ENCODE measurements at regions of chr1 and their contacts with region 1.

Region 1: GRCh38 chr1:109879881-109880525 is 30.6 kb upstream of the CSF1 start:
- DNase-seq: no peak
- ATAC-seq: no peak
- H3K4me3 ChIP-seq: no peak overlapping the region
- H3K27ac ChIP-seq: peak overlapping the region; percentile 85; the same call in 1 of the 2 replicates
- H3K4me1 ChIP-seq: peaks cover 67% of the 10 kb centered on the region
- H3K27me3 ChIP-seq: no peaks in the 10 kb centered on the region
- CTCF ChIP-seq: no peak

Region 2: GRCh38 chr1:109011335-109011734 is 868.7 kb before region 1 on chr1:
- CTCF ChIA-PET with region 1: interaction called, 12 read pairs
- POLR2A ChIA-PET with region 1: no interaction called
- in situ Hi-C with region 1: no loop called
- intact Hi-C with region 1: no loop called
- DNase-seq: no peak
- ATAC-seq: no peak
- H3K4me3 ChIP-seq: no peak overlapping the region
- H3K27ac ChIP-seq: no peak overlapping the region
- H3K4me1 ChIP-seq: no peaks in the 10 kb centered on the region
- H3K27me3 ChIP-seq: no peaks in the 10 kb centered on the region
- CTCF ChIP-seq: no peak

Measured in Panc1 (cell line).